ENCODE measurements at regions of chr9 and their contacts with region 1.

Region 1: GRCh38 chr9:112037281-112038016 is 137.6 kb downstream of the SUSD1 start:
- DNase-seq: peak in 8 of 9 donors; percentile 70 to 92 (median 86)
- ATAC-seq: peak; percentile 98
- H3K4me3 ChIP-seq: no peak overlapping the region
- H3K4me3 Mint-ChIP-seq: peak overlapping the region; percentile 57 to 84 (median 70)
- H3K27ac ChIP-seq: no peak overlapping the region
- H3K27ac Mint-ChIP-seq: peak overlapping the region; percentile 12 to 83 (median 42)
- H3K4me1 ChIP-seq: peaks cover 21 to 27% of the 10 kb centered on the region in 2 donors
- H3K4me1 Mint-ChIP-seq: peaks cover 29 to 71% (median 63%) of the 10 kb centered on the region in 7 donors
- H3K27me3 ChIP-seq: no peaks in the 10 kb centered on the region
- H3K27me3 Mint-ChIP-seq: peaks cover 0 to 18% (median 6%) of the 10 kb centered on the region in 5 donors

Region 2: DNA sequence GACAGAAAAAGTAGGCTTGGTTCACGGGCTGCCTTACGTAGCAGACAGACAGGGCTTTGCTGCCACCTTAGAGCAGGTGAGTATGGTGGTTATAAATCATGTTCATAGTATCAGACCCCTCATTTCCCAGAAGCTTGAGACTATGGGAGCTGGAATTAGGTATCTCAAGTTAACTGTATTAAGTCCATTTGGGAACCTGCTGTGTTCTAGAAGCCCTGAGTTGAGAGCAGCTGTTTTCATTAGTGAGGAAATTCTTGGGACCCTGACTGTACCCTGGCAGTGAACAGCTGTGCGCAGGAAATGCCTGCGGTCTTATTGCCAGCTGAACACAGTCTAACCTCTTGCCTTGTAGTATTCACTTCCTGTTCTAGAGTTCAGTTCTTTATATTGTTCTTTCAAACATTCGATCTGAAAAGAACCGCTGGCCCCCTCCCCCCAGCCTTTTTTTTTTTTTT is 111.0 kb before region 1 on chr9:
- CTCF ChIA-PET with region 1: no interaction called
- POLR2A ChIA-PET with region 1: no interaction called
- intact Hi-C with region 1: loop called in 1 of 2 experiments (anchors 1 kb)
- DNase-seq: peak in 7 of 9 donors; percentile 75 to 86 (median 82)
- ATAC-seq: peak; percentile 98
- H3K4me3 ChIP-seq: no peak overlapping the region
- H3K4me3 Mint-ChIP-seq: peak overlapping the region; percentile 61 to 79 (median 72)
- H3K27ac ChIP-seq: peak overlapping the region; percentile 23
- H3K27ac Mint-ChIP-seq: peak overlapping the region; percentile 79 to 94 (median 91)
- H3K4me1 ChIP-seq: peaks cover 29 to 35% of the 10 kb centered on the region in 2 donors
- H3K4me1 Mint-ChIP-seq: peaks cover 21 to 67% (median 50%) of the 10 kb centered on the region in 7 donors
- H3K27me3 ChIP-seq: no peaks in the 10 kb centered on the region
- H3K27me3 Mint-ChIP-seq: no peaks in the 10 kb centered on the region

Region 3: DNA sequence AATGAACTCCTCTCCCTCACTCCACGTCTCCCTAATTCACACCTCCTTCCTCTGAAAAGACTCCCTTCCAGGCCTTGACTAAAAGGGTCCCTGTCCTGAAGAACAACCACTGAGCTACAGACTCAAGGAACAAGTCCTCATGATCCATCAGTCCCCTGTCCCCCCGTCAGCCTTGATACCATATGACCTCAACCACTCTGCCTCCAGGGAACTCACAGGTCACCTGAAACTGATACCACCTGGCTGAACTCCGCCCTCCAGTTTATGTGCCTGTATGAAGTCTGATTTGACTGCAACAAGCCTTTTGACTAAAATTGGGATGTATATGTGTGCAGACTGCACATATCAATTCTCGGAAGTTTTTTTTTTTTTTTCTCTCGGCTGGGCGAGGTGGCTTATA is 52.1 kb before region 1 on chr9:
- CTCF ChIA-PET with region 1: no interaction called
- POLR2A ChIA-PET with region 1: no interaction called
- intact Hi-C with region 1: loop called in 1 of 2 experiments (anchors 5 kb)
- DNase-seq: no peak
- ATAC-seq: no peak
- H3K4me3 ChIP-seq: no peak overlapping the region
- H3K4me3 Mint-ChIP-seq: peak overlapping the region in 6 of 10 donors; percentile 28 to 59 (median 53)
- H3K27ac ChIP-seq: no peak overlapping the region
- H3K27ac Mint-ChIP-seq: peak overlapping the region in 1 of 9 donors; percentile 83
- H3K4me1 ChIP-seq: peaks cover 6 to 15% of the 10 kb centered on the region in 2 donors
- H3K4me1 Mint-ChIP-seq: peaks cover 18 to 37% (median 30%) of the 10 kb centered on the region in 7 donors
- H3K27me3 ChIP-seq: no peaks in the 10 kb centered on the region
- H3K27me3 Mint-ChIP-seq: peaks cover 0 to 13% (median 0%) of the 10 kb centered on the region in 5 donors

Region 4: GRCh38 chr9:112002131-112002846 is 35.2 kb before region 1 on chr9:
- CTCF ChIA-PET with region 1: no interaction called
- POLR2A ChIA-PET with region 1: interaction called, 3 read pairs
- intact Hi-C with region 1: loop called in 1 of 2 experiments (anchors 1 kb)
- DNase-seq: peak in 7 of 9 donors; percentile 39 to 75 (median 66)
- ATAC-seq: peak; percentile 77
- H3K4me3 ChIP-seq: peak overlapping the region; percentile 19
- H3K4me3 Mint-ChIP-seq: peak overlapping the region in 9 of 10 donors; percentile 1 to 80 (median 61)
- H3K27ac ChIP-seq: no peak overlapping the region
- H3K27ac Mint-ChIP-seq: peak overlapping the region; percentile 29 to 85 (median 78)
- H3K4me1 ChIP-seq: peaks cover 4 to 17% of the 10 kb centered on the region in 2 donors
- H3K4me1 Mint-ChIP-seq: peaks cover 17 to 56% (median 27%) of the 10 kb centered on the region in 7 donors
- H3K27me3 ChIP-seq: no peaks in the 10 kb centered on the region
- H3K27me3 Mint-ChIP-seq: peaks cover 0 to 30% (median 0%) of the 10 kb centered on the region in 5 donors

Region 5: GRCh38 chr9:112174218-112174964 is 136.9 kb after region 1 on chr9:
- CTCF ChIA-PET with region 1: no interaction called
- POLR2A ChIA-PET with region 1: no interaction called
- intact Hi-C with region 1: loop called in 1 of 2 experiments (anchors 5 kb)
- DNase-seq: peak; percentile 42 to 80 (median 63)
- ATAC-seq: peak; percentile 87
- H3K4me3 ChIP-seq: peak overlapping the region; percentile 67
- H3K4me3 Mint-ChIP-seq: peak overlapping the region; percentile 83 to 94 (median 90)
- H3K27ac ChIP-seq: peak overlapping the region; percentile 9
- H3K27ac Mint-ChIP-seq: peak overlapping the region; percentile 65 to 95 (median 87)
- H3K4me1 ChIP-seq: peaks cover 33 to 54% of the 10 kb centered on the region in 2 donors
- H3K4me1 Mint-ChIP-seq: peaks cover 49 to 81% (median 73%) of the 10 kb centered on the region in 7 donors
- H3K27me3 ChIP-seq: no peaks in the 10 kb centered on the region
- H3K27me3 Mint-ChIP-seq: peaks cover 0 to 3% (median 0%) of the 10 kb centered on the region in 5 donors

Measured in naive thymus-derived CD4-positive, alpha-beta T cell (primary cell).